ENCODE measurements at regions of chr2 and their contacts with region 1.

Region 1: DNA sequence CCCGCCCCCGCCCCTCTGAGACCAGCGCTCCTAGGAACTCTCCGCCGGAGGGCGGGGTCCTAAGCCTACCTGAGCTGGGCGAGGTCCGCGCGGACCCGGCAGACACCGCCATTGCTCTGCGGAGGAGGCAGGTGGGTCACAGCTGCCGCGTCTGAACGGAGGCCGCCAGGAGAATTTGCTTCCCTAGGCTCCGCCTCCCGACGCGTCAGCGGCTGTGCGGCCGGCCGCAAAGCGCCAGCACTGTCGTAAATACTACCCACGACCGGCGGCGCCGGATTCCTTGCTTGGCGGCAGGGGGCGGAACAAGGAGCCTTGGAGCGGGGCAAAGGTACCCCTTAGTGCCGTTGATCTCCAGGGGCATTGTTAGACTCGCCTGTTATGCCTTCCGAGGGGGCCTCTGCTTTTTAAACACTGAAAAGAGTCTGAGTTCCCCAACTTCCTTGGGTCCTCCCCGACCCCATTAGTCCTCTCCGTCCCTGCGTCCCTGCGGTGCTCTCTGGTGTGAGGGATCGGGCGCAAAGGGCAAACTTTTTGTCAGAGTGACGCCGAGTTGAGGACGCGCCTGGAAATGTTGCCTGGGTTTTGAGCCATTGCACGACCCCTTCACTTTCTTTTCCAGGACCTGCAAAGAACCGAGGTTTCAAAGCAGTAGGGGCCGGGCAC is at the start of gene GGCX:
- DNase-seq: peak; percentile 88 to 97 (median 93)
- ATAC-seq: peak; percentile 89
- H3K4me3 ChIP-seq: peak within 1 kb of the TSS; percentile 81
- H3K4me3 Mint-ChIP-seq: peak within 1 kb of the TSS; percentile 99
- H3K27ac ChIP-seq: peak within 1 kb of the TSS; percentile 67 to 68
- H3K27ac Mint-ChIP-seq: peak within 1 kb of the TSS; percentile 95
- H3K4me1 ChIP-seq: peaks cover 20% of the 10 kb centered on the region
- H3K4me1 Mint-ChIP-seq: peaks cover 30% of the 10 kb centered on the region
- H3K27me3 ChIP-seq: no peaks in the 10 kb centered on the region
- H3K27me3 Mint-ChIP-seq: no peaks in the 10 kb centered on the region
- CTCF ChIP-seq: no peak
- total RNA-seq, gene GGCX: 22.9 to 27.6 TPM

Region 2: GRCh38 chr2:85577386-85578242 is 16.2 kb after region 1 on chr2 and contains the start of gene VAMP8:
- CTCF ChIA-PET with region 1: no interaction called
- POLR2A ChIA-PET with region 1: interaction called, 19 read pairs
- intact Hi-C with region 1: no loop called
- DNase-seq: peak in 13 of 14 experiments; percentile 37 to 82 (median 59)
- ATAC-seq: peak; percentile 81
- H3K4me3 ChIP-seq: peak within 1 kb of the TSS; percentile 84
- H3K4me3 Mint-ChIP-seq: peak within 1 kb of the TSS; percentile 93
- H3K27ac ChIP-seq: peak within 1 kb of the TSS; percentile 47 to 63
- H3K27ac Mint-ChIP-seq: peak within 1 kb of the TSS; percentile 94
- H3K4me1 ChIP-seq: peaks cover 41% of the 10 kb centered on the region
- H3K4me1 Mint-ChIP-seq: peaks cover 44% of the 10 kb centered on the region
- H3K27me3 ChIP-seq: no peaks in the 10 kb centered on the region
- H3K27me3 Mint-ChIP-seq: no peaks in the 10 kb centered on the region
- CTCF ChIP-seq: no peak
- total RNA-seq, gene VAMP8: 32.3 to 37.3 TPM

Region 3: DNA sequence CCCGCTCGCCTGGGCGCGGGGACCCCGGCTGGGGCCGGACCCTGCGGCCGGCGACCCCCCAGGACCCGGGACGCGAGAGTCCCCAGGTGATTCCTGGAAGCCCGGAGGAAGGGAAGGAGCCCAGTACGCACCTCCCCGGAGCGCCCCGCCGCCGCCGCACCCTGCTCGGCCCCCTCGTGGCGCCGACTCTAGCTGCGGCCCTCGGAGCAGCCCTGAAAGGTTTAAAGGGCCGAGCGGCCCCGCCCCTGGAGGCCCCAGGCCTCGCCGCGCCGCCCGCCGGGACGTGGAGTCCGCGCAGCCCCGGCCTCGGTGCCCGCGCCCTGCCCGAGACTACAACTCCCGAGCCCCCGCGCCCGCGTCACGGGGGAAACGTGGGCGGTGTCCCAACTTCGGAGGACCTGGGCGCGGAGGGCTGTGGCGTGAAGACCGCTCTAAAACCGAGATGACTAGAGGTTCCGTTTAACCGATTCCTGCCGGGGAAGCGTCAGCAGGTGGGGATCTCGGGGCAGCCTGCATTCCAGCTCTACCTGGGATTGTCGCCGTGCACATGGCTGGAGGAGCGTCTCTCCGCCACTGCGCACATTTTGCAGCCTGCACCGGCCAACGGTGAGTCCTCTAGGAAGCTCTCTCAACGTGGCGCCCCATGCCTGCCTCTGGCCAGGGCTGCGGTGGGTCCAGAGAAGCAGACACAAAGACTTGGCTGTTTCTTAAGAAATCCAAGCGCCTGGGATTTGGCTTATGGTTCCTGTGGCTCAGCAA is 41.2 kb after region 1 on chr2 and contains the start of gene TMEM150A:
- CTCF ChIA-PET with region 1: interaction called, 3 read pairs
- POLR2A ChIA-PET with region 1: interaction called, 4 read pairs
- intact Hi-C with region 1: loop called in 1 of 2 experiments (anchors 5 kb)
- DNase-seq: peak; percentile 67 to 93 (median 85)
- ATAC-seq: peak; percentile 90
- H3K4me3 ChIP-seq: peak within 1 kb of the TSS; percentile 97
- H3K4me3 Mint-ChIP-seq: peak within 1 kb of the TSS; percentile 94
- H3K27ac ChIP-seq: peak within 1 kb of the TSS; percentile 40 to 44
- H3K27ac Mint-ChIP-seq: peak within 1 kb of the TSS; percentile 76
- H3K4me1 ChIP-seq: peaks cover 39% of the 10 kb centered on the region
- H3K4me1 Mint-ChIP-seq: peaks cover 30% of the 10 kb centered on the region
- H3K27me3 ChIP-seq: no peaks in the 10 kb centered on the region
- H3K27me3 Mint-ChIP-seq: no peaks in the 10 kb centered on the region
- CTCF ChIP-seq: peak; percentile 31
- total RNA-seq, gene TMEM150A: 6.6 to 7.0 TPM

Region 4: DNA sequence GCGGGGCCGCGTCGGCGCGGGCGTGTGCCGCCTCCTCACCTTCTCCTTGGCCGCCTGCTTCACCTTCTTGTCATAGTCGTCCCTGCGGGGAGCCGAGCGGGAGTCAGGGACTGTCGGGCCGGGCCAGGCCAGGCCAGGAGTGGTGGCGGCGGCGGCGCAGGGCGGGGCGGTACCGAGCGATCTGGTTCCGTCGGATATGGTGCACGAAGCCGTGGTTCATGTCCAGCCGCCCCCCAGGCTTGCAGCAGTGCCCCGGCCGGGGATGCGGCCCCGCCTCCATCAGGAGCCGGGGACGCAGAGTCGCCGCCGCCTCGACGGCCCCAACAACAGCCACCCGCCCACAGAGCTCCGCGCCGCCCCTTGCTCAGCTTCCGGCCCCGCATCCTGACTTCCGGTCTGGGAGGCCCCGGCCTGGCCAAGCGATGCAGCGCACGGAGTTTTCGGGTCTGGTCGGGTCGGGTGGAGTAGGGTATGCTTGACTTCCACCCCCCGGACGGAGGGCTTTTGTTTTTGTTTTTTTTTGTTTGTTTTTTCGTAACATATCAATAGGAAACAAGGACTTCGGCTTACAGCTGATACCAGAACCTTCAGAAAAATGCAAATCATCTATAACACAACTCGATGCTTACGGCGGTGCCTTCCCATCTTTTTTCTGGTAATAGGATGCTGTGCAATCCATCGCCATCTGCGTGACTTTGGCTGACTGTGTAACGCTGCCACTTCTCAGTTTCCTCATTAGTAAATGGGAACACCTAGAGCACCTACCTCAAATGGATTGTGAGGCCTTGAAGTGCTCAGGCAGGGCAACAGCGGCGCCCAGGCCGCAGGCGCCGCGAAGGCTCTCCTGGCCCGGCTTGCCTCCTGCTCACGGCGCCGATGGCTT is 50.5 kb after region 1 on chr2 and contains the start of gene C2orf68:
- CTCF ChIA-PET with region 1: interaction called, 3 read pairs
- POLR2A ChIA-PET with region 1: interaction called, 5 read pairs
- intact Hi-C with region 1: loop called in 1 of 2 experiments (anchors 1 kb)
- DNase-seq: peak; percentile 59 to 88 (median 79)
- ATAC-seq: peak; percentile 52
- H3K4me3 ChIP-seq: peak within 1 kb of the TSS; percentile 58
- H3K4me3 Mint-ChIP-seq: peak within 1 kb of the TSS; percentile 95
- H3K27ac ChIP-seq: peak within 1 kb of the TSS; percentile 74 to 82
- H3K27ac Mint-ChIP-seq: peak within 1 kb of the TSS; percentile 86
- H3K4me1 ChIP-seq: peaks cover 40% of the 10 kb centered on the region
- H3K4me1 Mint-ChIP-seq: peaks cover 39% of the 10 kb centered on the region
- H3K27me3 ChIP-seq: no peaks in the 10 kb centered on the region
- H3K27me3 Mint-ChIP-seq: no peaks in the 10 kb centered on the region
- CTCF ChIP-seq: no peak
- total RNA-seq, gene C2orf68: 31.0 to 31.2 TPM